Activated naive CD4-positive, alpha-beta T cell treated with anti-CD3 and anti-CD28 coated beads for 36 hours (primary cell): ENCODE measurements at regions of chr9 and their contacts with region 1.

Region 1: GRCh38 chr9:80134487-80134886 is 562.7 kb downstream of the TLE4 start:
- DNase-seq: peak; percentile 6
- H3K4me3 Mint-ChIP-seq: no peak overlapping the region
- H3K27ac Mint-ChIP-seq: no peak overlapping the region
- H3K4me1 Mint-ChIP-seq: peaks cover 9% of the 10 kb centered on the region
- H3K27me3 Mint-ChIP-seq: peaks cover 4% of the 10 kb centered on the region

Region 2: DNA sequence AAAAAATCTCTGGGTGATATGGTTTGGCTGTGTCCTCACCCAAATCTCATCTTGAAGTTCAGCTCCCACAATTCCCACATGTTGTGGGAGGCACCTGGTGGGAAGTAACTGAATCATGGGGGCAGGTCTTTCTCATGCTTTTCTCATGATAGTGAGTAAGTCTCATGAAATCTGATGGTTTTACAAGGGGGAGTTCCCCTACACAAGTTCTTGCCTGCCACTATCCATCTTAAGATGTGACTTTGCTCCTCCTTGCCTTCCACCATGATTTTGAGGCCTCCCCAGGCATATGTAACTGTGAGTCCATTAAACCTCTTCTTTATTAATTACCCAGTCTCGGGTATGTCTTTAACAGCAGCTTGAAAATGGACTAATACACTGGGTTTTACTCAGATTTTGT is 48.8 kb before region 1 on chr9:
- CTCF ChIA-PET with region 1: no interaction called
- intact Hi-C with region 1: loop called (anchors 1 kb)
- DNase-seq: peak; percentile 6
- H3K4me3 Mint-ChIP-seq: no peak overlapping the region
- H3K27ac Mint-ChIP-seq: no peak overlapping the region
- H3K4me1 Mint-ChIP-seq: peaks cover 20% of the 10 kb centered on the region
- H3K27me3 Mint-ChIP-seq: peaks cover 2% of the 10 kb centered on the region

Region 3: GRCh38 chr9:80391886-80392285 is 257.4 kb after region 1 on chr9:
- CTCF ChIA-PET with region 1: no interaction called
- intact Hi-C with region 1: no loop called
- DNase-seq: no peak
- H3K4me3 Mint-ChIP-seq: no peak overlapping the region
- H3K27ac Mint-ChIP-seq: no peak overlapping the region
- H3K4me1 Mint-ChIP-seq: no peaks in the 10 kb centered on the region
- H3K27me3 Mint-ChIP-seq: no peaks in the 10 kb centered on the region